ENCODE measurements at regions of chr12 and their contacts with region 1.

Region 1: DNA sequence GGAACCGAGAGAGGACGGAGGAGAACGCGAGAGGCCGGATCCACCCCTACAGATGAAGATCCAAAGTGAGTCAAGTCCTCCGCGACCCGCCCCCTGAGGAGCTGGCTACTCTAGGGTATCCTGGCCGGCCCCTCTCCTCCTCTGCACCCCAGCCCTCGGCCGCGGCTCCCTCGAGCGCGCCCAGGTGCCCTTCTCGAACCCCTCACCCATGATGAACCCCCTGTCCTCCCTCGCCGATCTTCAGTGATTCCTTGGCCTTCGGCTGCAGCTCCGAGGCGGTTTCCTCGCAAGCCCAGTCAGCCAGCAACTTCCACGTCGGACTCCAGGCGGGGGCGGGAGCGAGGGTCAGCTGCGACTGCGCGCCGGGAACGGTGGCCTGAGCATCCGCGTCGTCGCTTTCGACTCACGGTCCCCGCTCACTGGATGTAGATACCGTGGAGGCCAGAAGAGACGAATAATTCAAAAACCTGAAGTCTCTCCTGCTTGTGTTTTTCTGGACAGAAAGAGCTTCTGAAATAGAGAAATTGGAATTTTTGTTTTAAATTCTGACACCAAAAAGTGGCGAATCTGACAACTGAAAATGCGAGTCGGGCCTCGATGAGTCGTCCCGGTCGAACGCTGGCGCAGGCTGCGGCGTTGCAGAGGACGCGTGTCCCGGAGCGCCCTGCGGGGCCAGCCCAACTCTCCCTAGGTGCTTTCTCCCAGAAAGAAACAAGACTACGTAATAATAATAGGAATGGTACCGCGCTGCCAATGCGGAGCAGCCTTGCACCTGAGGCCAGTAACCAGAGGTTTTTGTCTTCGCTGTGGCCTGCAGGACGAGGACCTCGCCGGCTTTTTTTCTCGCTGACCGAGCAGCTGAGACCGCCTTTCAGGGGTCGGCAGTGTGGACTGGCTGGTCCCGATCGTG is at the start of gene ARL1:
- H3K4me3 Mint-ChIP-seq: peak within 1 kb of the TSS; percentile 97
- H3K27ac Mint-ChIP-seq: peak within 1 kb of the TSS; percentile 93
- H3K4me1 Mint-ChIP-seq: peaks cover 18% of the 10 kb centered on the region
- H3K27me3 Mint-ChIP-seq: no peaks in the 10 kb centered on the region

Region 2: GRCh38 chr12:101280006-101280505 is 127.6 kb before region 1 on chr12 and contains the start of gene UTP20:
- intact Hi-C with region 1: loop called (anchors 5 kb)
- H3K4me3 Mint-ChIP-seq: peak within 1 kb of the TSS; percentile 95
- H3K27ac Mint-ChIP-seq: peak within 1 kb of the TSS; percentile 86
- H3K4me1 Mint-ChIP-seq: peaks cover 8% of the 10 kb centered on the region
- H3K27me3 Mint-ChIP-seq: peaks cover 11% of the 10 kb centered on the region

Region 3: GRCh38 chr12:101697197-101697929 is 289.7 kb after region 1 on chr12 and contains the start of gene CHPT1:
- intact Hi-C with region 1: loop called (anchors 2 kb)
- H3K4me3 Mint-ChIP-seq: peak within 1 kb of the TSS; percentile 94
- H3K27ac Mint-ChIP-seq: peak within 1 kb of the TSS; percentile 84
- H3K4me1 Mint-ChIP-seq: peaks cover 44% of the 10 kb centered on the region
- H3K27me3 Mint-ChIP-seq: no peaks in the 10 kb centered on the region

Region 4: DNA sequence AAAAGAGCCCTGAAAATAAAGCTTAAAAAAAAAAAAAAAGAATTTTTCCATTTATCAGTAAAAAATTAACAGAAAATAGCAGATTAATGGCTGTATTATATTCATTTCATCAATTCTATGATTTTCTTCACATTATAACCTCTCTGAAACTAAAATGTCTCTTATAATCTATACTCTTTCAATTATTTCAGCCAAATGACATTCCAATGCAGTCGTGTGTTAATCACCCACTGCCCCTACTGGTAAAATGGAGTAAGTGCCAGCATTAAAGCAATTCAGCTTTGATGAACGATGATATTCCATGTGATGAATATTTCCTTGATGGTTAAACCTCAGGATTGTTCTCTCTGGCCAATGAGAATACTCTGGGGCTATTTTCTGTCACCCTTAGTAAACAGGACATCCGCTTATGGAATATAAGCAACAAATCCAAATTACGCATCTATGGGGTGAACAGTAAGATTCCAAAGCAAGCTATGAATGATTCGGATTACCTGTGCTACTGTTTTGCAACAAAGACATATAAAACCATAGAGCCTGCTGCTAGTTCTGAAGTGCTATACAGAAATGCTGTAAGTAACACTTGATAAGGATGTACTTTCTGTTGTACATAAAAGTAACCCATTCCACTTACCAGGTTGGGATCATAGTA is 351.8 kb after region 1 on chr12:
- intact Hi-C with region 1: loop called (anchors 5 kb)
- H3K4me3 Mint-ChIP-seq: no peak overlapping the region
- H3K27ac Mint-ChIP-seq: no peak overlapping the region
- H3K4me1 Mint-ChIP-seq: peaks cover 18% of the 10 kb centered on the region
- H3K27me3 Mint-ChIP-seq: no peaks in the 10 kb centered on the region

Region 5: DNA sequence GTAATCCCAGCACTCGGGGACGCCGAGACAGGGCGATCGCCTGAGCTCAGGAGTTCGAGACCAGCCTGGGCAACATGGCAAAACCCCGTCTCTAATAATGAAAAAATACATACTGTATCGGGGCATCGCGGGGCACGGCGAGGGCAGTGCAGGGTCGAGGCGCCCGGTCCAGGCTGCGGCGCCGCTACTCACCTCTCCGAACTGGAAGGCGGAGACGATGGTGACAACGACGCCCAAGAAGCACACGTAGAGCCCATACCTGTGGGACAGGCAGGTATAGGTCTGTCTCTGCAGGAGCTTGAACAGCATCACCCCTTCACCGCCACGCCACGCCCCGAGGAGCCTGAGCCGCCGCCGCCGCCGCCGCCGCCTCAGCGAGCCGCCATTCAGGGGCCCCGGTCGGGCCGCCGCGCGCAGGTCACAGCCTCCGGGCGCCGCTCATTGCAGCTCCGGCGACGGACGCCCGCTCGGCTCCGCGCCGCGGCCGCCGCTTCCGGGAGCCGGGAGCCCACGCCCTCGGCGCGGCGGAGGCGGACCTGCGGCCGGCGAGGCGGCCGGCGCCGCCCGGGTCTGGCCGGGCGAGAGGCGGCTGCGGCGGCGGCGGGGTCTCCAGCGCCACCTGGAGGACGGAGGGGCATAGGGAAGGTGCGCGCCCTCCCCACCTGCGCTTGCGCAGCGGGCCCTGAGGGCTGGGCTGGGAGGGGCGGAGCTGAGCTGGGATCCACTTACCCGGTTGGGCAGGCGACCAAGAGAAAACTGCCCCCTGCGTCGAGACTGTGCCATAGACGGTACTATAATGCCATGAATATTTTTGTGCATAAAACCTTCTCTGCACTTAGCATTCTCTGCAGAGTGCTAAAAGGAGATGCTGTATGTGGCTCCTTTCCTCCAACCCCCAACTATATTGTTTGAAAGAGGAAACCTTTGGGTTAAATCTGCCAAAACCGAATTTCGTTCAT is 423.0 kb after region 1 on chr12 and contains the start of gene GNPTAB:
- intact Hi-C with region 1: loop called (anchors 2 kb)
- H3K4me3 Mint-ChIP-seq: peak within 1 kb of the TSS; percentile 97
- H3K27ac Mint-ChIP-seq: peak within 1 kb of the TSS; percentile 85
- H3K4me1 Mint-ChIP-seq: peaks cover 32% of the 10 kb centered on the region
- H3K27me3 Mint-ChIP-seq: no peaks in the 10 kb centered on the region

Measured in dendritic cell treated with granulocyte-macrophage colony-stimulating factor and Interleukin-4, amounts not matched to agents 40 ng/mL and 50 ng/mL, for 4 days (primary cell).